ENCODE measurements at regions of chr19 and their contacts with region 1.

Region 1: DNA sequence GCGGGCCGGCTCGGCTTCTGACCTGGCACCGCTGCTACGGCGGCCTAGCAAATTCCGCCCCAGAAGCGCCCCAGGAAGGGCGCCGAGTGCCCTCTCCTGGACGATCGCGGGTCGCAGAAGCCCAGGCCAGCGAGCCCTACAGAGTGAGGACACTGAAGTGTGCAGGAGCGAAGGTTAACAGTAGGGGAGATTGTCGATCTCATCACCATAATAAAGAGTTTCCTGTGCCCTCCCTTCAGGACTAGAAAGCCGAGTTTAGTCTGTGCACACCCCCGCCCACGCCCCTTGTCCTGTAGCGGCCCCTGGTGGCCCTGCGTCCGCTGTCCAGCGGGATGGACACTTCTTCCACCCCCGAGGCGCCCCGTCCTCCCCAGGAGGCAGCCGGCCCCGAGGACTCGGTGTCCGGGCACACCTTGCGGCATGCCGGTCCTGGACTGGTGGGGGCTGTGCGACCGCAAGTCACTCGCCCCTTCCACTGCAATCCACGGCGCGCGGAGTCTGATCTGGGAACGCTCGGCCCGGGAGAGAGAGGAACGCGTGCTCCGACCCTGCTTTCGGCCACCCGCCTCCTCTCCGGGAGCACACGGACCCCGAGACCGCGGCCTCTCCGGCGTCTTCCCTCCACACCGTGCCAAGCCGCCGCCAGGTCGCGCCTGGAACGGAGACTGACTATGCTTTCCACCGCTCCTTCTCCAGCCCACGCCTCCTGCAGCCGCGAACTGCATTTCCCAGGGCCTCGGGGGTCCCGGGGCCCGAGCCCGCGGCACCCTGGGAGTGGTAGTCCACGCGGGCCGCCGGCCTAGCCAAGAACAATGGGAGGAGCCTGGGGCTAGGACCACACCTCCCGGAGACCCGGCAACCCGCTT is 769 bp upstream of the KMT2B start:
- DNase-seq: peak; percentile 97 to 99 (median 98)
- ATAC-seq: peak; percentile 95 to 96
- H3K4me3 ChIP-seq: peak overlapping the region; percentile 94
- H3K27ac ChIP-seq: peak overlapping the region; percentile 79
- H3K4me1 ChIP-seq: peaks cover 3% of the 10 kb centered on the region
- H3K27me3 ChIP-seq: no peaks in the 10 kb centered on the region

Region 2: DNA sequence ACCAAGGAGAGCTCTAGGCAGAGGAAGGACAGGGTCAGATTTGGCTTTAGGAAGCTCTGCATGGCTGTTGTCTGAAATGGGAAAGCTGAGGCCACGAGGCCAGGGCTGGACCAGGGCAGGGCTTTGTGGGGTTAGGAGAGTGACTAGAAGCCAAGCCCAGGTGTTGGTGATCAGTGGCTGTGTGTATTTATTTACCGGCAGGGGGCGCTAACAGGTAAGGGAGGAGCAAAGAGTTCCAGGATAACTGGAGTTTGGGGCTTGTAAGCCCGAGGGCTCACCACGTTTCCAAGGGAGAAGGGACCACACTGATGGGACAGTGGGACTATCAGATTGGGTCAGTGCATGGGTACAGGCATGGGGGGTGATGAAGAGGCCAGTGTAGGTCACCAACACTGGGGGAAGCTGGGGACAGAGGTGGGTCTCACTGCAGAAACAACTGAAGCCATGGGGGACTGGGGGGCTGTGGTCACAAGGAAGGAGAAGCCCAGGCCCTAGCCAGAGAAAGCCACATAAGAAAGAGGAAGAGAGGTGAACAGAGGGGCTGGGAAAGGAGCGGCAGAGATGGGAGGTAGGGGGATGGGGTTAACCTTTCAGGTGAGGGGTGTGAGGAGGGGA is 167.8 kb before region 1 on chr19:
- intact Hi-C with region 1: loop called in 1 of 4 experiments (anchors 2 kb)
- DNase-seq: peak in 1 of 3 donors; percentile 45
- ATAC-seq: no peak
- H3K4me3 ChIP-seq: no peak overlapping the region
- H3K27ac ChIP-seq: no peak overlapping the region
- H3K4me1 ChIP-seq: peaks cover 7% of the 10 kb centered on the region
- H3K27me3 ChIP-seq: no peaks in the 10 kb centered on the region

Region 3: DNA sequence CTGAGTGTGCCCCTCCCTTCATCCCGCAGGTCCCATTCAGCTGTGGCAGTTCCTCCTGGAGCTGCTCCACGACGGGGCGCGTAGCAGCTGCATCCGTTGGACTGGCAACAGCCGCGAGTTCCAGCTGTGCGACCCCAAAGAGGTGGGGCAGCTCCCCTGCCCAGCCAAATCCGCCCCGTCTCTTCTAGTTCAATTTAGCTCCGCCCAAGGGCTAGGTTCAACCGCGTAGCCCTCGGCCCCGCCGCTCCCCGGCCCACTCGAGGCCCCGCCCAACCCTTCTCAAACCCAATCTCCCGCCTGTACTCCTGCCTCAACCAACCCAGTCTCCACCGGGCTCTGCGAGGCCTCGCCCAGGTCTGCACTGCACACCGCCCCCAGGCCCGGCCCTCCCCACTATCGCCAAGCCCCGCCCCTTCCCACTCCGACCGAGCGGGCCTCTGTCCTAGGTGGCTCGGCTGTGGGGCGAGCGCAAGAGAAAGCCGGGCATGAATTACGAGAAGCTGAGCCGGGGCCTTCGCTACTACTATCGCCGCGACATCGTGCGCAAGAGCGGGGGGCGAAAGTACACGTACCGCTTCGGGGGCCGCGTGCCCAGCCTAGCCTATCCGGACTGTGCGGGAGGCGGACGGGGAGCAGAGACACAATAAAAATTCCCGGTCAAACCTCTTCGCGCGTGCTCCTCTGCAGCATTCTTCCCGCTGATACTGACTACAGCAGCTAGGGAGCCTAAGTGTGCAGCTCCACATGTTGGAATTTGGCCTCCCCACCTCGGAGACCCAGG is 72.6 kb before region 1 on chr19:
- intact Hi-C with region 1: no loop called
- DNase-seq: peak; percentile 97 to 98 (median 98)
- ATAC-seq: peak; percentile 92 to 95
- H3K4me3 ChIP-seq: peak overlapping the region; percentile 56
- H3K27ac ChIP-seq: peak overlapping the region; percentile 88
- H3K4me1 ChIP-seq: no peaks in the 10 kb centered on the region
- H3K27me3 ChIP-seq: no peaks in the 10 kb centered on the region

Region 4: DNA sequence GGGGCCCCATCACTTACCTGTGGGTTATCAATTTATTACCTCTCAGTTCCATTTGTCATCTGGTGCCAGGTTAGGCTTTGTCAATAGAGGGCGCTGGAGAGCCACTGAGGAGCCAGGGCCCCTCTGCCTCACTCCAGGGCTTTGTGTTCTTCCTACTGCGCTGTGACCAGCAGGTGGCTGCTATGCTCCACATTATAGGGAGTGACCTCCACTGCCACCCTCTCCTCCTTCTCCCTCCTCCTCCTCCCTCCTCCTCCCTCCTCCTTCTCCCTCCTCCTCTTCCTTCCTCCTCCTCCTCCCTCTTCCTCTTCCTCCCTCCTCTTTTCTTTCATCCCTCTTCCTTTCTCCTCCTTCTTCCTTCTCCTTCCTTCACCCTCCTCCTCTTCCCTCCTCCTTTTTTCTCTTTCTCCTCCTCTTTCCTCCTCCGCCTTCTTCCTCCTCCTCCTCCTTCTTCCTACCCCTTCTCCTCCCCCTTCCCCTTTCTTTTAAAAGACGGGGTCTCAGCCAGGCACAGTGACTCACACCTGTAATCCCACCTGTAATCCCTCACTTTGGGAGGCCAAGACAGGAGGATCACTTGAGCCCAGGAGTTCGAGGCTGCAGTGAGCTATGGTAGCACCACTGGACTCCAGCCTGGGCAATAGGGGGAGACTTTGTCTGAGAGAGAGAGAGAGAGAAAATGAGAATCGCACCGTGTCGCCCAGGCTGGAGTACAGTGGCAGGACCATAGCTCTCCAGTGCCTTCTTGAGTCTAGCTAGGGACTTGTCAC is 23.0 kb before region 1 on chr19:
- intact Hi-C with region 1: loop called in 2 of 4 experiments (anchors 1 to 2 kb)
- DNase-seq: peak; percentile 88 to 94 (median 91)
- ATAC-seq: peak; percentile 99
- H3K4me3 ChIP-seq: no peak overlapping the region
- H3K27ac ChIP-seq: no peak overlapping the region
- H3K4me1 ChIP-seq: no peaks in the 10 kb centered on the region
- H3K27me3 ChIP-seq: no peaks in the 10 kb centered on the region